PC-9 (cell line): ENCODE measurements at regions of chr7 and their contacts with region 1.

Region 1: GRCh38 chr7:13945670-13946069 is 43.8 kb downstream of the ETV1 start:
- DNase-seq: no peak
- H3K4me3 ChIP-seq: no peak overlapping the region
- H3K27ac ChIP-seq: no peak overlapping the region
- H3K4me1 ChIP-seq: no peaks in the 10 kb centered on the region
- H3K27me3 ChIP-seq: no peaks in the 10 kb centered on the region
- CTCF ChIP-seq: no peak

Region 2: GRCh38 chr7:12951397-12951801 is 994.3 kb before region 1 on chr7:
- CTCF ChIA-PET with region 1: no interaction called
- POLR2A ChIA-PET with region 1: interaction called, 22 read pairs
- intact Hi-C with region 1: no loop called
- DNase-seq: peak; percentile 3 to 78
- H3K4me3 ChIP-seq: no peak overlapping the region
- H3K27ac ChIP-seq: no peak overlapping the region
- H3K4me1 ChIP-seq: peaks cover 12% of the 10 kb centered on the region
- H3K27me3 ChIP-seq: no peaks in the 10 kb centered on the region
- CTCF ChIP-seq: no peak

Region 3: DNA sequence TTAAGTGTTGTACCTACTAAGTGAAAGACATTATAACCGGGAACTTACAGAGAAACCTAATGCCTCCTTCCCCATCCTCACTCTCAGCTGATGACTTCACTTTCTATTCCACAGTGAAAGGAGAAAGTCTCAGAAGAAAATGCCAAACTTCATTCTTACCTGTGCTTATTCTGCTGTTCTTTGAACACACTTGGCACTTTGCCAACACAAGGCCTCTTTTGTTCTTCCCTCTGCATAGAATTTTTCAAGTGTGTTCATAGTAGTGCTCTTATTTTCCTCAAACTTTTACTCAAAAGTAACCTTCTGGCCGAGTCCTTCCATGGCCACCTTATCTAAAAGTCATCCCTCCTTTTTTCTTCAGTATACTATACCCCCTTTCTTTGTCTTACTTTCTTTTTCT is 103.2 kb after region 1 on chr7:
- CTCF ChIA-PET with region 1: no interaction called
- POLR2A ChIA-PET with region 1: no interaction called
- intact Hi-C with region 1: no loop called
- DNase-seq: no peak
- H3K4me3 ChIP-seq: no peak overlapping the region
- H3K27ac ChIP-seq: no peak overlapping the region
- H3K4me1 ChIP-seq: no peaks in the 10 kb centered on the region
- H3K27me3 ChIP-seq: no peaks in the 10 kb centered on the region
- CTCF ChIP-seq: no peak